ENCODE measurements at regions of chr12 and their contacts with region 1.

Region 1: DNA sequence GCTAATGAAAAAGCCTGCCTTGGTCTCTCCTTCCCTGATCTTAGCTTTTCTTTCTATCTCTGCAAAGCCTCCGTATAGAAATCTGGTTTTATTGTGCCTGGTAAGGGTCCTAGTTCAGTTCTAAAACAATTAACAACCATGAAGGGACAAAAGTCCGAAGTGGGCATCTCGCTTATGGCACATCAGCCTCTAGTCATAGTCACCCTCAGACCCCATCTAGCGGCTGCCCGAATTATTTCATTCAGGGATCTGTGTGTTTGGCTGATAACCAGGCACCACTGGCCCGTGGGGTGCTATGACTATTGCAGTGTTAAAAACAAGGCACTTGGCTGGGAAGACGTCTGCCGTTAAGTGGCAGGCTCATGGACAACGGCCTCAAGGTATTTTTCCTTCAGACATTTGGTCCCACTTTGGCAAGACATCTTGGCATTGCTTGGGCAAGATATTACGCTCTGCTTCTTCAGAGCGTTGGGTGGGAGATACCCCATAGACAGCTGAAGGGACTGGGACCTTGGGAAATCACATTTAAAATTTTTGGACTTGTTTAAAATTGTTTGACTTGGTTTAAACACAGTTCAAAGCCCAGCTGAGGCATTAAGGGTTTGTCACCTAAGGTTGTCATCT is 87.1 kb downstream of the SINHCAF start:
- DNase-seq: peak; percentile 25
- H3K4me3 Mint-ChIP-seq: no peak overlapping the region
- H3K27ac Mint-ChIP-seq: no peak overlapping the region
- H3K4me1 Mint-ChIP-seq: peaks cover 11% of the 10 kb centered on the region
- H3K27me3 Mint-ChIP-seq: peaks cover 14% of the 10 kb centered on the region

Region 2: DNA sequence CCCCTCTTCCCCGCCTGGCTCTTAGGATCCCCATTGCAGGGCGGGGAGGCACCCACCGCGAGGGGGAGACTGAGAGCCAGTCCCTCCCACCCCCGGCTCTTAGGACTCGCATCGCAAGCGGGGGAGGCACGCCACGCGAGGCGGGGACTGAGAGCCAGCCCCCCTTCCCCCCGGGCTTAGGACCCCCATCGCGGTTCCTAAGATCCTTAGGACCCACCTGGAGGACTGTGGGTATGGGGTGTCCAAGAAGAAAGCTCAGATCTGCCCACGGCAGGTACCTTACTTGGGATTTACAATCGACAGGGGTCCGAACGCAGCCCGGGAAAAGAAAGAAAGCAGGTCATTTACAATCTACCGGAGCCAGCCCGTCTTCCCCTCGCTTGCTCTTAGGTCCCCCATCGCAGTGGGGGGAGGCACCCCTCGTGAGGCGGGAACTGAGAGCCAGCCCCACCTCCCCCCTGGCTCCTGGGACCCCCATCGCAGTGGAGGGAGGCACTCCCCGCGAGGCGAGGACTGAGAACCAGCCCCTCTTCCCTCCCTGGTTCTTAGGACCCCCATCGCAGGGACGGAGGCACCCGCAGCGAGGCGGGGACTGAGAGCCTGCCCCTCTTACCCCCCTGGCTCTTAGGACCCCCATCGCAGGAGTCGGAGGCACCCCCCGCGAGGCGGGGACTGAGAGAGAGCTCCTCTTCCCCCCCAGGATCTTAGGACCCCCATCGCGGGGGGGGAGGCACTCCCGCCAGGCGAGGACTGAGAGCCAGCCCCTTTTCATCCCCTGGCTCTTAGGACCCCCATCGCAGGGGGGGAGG is 121.5 kb before region 1 on chr12:
- intact Hi-C with region 1: loop called (anchors 2 kb)
- DNase-seq: peak; percentile 23
- H3K4me3 Mint-ChIP-seq: peak overlapping the region; percentile 60
- H3K27ac Mint-ChIP-seq: no peak overlapping the region
- H3K4me1 Mint-ChIP-seq: no peaks in the 10 kb centered on the region
- H3K27me3 Mint-ChIP-seq: peaks cover 31% of the 10 kb centered on the region

Region 3: DNA sequence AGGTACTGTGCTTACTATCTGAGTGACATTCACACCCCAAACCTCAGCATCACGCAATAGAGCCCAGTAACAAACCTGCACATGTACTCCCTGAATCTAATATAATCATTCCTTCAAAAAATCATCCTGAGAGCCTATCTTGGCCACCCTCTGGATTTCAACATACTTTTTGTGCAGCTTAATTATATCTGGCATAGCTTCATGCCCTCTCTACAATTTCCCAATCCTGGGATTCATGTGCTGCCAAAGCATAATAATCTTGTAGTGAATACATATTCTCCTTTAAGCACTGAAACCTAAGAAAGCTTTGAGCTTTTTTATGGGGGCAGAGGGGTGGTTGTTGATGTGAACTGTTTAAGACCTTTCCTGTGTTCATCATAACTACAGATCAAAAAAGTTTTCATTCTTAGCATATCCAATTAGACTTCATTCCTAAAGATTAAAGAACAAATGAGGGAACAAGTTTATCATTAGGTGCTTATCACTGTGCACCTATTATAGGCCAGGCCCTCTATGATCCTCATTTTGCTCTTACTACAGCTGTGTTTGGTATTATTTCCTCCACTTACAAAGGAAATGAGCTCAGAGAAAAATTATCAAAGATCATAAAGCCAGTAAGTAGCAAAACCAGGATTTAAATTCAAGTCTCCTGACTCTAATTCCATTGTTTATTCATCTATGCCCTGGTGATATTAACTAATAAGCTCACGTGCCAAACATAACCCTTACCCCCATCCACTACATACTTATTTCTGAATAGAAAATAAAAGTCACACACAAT is 35.8 kb after region 1 on chr12:
- intact Hi-C with region 1: no loop called
- DNase-seq: no peak
- H3K4me3 Mint-ChIP-seq: no peak overlapping the region
- H3K27ac Mint-ChIP-seq: peak overlapping the region; percentile 40
- H3K4me1 Mint-ChIP-seq: peaks cover 6% of the 10 kb centered on the region
- H3K27me3 Mint-ChIP-seq: no peaks in the 10 kb centered on the region

Measured in activated T-helper 1 cell treated with anti-CD3 and anti-CD28 coated beads, Interleukin-12 subunit alpha, Interleukin-12 subunit beta, Interleukin-2, Interleukin-4 antibody, amounts not matched to agents 30 ng/mL and 10 ng/mL and 1 ng/mL, durations not matched to agents 14 hours and 24 hours and 36 hours (primary cell).